Activated CD4-positive, alpha-beta T cell treated with anti-CD3 and anti-CD28 coated beads, Interleukin-2, amount 10 ng/mL, durations not matched to agents 24 days and 14 days (primary cell): ENCODE measurements at regions of chr19 and their contacts with region 1.

Region 1: GRCh38 chr19:47035127-47036096 is 13.0 kb downstream of the TMEM160 start:
- DNase-seq: peak; percentile 100
- H3K4me3 Mint-ChIP-seq: peak overlapping the region; percentile 86
- H3K27ac Mint-ChIP-seq: peak overlapping the region; percentile 92
- H3K4me1 Mint-ChIP-seq: peaks cover 25% of the 10 kb centered on the region
- H3K27me3 Mint-ChIP-seq: peaks cover 10% of the 10 kb centered on the region

Region 2: GRCh38 chr19:46736544-46737297 is 298.7 kb before region 1 on chr19:
- intact Hi-C with region 1: no loop called
- DNase-seq: no peak
- H3K4me3 Mint-ChIP-seq: no peak overlapping the region
- H3K27ac Mint-ChIP-seq: no peak overlapping the region
- H3K4me1 Mint-ChIP-seq: peaks cover 12% of the 10 kb centered on the region
- H3K27me3 Mint-ChIP-seq: no peaks in the 10 kb centered on the region

Region 3: DNA sequence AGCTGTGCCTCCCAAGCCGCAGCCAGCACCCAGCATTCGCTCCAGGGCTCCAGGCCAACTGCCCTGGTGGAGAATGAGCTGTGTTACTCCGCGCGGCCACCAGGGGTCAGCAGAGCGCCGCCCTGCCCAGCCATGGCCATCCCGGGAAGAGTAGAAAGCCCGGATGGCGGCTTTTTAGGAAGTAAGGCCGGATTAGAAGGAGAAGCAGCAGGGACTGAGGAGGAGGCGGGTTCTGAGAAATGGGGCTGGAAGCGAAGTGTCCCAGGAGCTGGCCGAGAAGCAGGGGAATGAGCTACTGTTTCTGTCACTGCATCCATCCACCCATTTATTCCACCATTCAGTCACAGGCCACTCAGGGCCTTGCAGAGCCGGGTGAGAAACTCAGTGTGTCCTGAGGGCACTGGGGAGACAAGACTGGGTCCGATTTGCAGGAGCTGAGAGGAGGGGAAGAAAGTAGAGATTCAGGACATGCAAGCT is 22.3 kb before region 1 on chr19:
- intact Hi-C with region 1: loop called (anchors 1 kb)
- DNase-seq: peak; percentile 91
- H3K4me3 Mint-ChIP-seq: peak overlapping the region; percentile 18
- H3K27ac Mint-ChIP-seq: no peak overlapping the region
- H3K4me1 Mint-ChIP-seq: peaks cover 9% of the 10 kb centered on the region
- H3K27me3 Mint-ChIP-seq: peaks cover 16% of the 10 kb centered on the region

Region 4: GRCh38 chr19:47047763-47048405 is 12.5 kb after region 1 on chr19:
- intact Hi-C with region 1: loop called (anchors 1 kb)
- DNase-seq: peak; percentile 93
- H3K4me3 Mint-ChIP-seq: peak overlapping the region; percentile 98
- H3K27ac Mint-ChIP-seq: peak overlapping the region; percentile 93
- H3K4me1 Mint-ChIP-seq: peaks cover 18% of the 10 kb centered on the region
- H3K27me3 Mint-ChIP-seq: peaks cover 2% of the 10 kb centered on the region

Region 5: DNA sequence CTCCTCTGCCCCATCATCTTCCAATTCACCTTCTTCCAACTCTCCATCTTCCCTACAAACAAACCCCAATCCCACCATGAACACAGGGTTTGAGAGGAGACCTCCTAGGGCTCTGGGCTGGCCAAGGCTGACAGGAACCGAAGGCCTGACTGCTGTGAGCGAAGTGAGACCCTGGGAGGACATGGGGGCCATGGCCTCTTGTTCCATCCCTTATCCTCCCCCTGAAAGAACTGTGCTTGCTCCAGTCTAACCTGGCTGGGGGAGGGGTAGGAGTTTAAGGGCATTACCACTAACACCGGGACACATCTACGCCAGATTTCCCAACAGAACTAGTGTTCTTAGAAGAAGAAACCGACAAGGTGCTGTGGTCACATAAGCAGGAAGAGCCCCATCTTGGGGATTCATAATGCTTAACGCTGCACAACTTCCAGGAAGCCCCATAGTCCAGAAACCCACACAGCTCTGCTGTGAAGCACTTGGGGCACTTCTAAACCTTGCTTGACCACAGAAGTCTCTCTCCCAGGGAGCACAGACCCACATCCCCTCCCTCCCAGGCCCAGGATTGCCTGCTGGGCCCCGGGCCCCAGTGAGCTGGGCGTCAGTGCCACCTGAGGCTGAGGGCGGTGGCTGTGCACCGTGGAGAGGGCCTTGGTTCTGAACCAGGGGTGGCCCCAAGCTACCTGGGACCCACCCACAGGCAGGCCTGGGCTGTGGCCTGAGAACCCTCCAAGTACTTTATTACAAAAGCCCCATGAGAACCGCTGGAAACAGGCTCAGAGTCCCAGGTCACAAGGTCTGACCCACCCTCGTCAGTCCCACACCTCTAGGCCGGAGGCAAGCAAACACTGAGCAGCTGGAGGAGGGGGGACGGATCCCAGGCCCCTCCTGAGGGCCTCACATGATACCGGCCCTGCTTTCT is 59.4 kb after region 1 on chr19:
- intact Hi-C with region 1: loop called (anchors 5 kb)
- DNase-seq: peak; percentile 88
- H3K4me3 Mint-ChIP-seq: peak overlapping the region; percentile 86
- H3K27ac Mint-ChIP-seq: peak overlapping the region; percentile 94
- H3K4me1 Mint-ChIP-seq: peaks cover 62% of the 10 kb centered on the region
- H3K27me3 Mint-ChIP-seq: no peaks in the 10 kb centered on the region

Region 6: DNA sequence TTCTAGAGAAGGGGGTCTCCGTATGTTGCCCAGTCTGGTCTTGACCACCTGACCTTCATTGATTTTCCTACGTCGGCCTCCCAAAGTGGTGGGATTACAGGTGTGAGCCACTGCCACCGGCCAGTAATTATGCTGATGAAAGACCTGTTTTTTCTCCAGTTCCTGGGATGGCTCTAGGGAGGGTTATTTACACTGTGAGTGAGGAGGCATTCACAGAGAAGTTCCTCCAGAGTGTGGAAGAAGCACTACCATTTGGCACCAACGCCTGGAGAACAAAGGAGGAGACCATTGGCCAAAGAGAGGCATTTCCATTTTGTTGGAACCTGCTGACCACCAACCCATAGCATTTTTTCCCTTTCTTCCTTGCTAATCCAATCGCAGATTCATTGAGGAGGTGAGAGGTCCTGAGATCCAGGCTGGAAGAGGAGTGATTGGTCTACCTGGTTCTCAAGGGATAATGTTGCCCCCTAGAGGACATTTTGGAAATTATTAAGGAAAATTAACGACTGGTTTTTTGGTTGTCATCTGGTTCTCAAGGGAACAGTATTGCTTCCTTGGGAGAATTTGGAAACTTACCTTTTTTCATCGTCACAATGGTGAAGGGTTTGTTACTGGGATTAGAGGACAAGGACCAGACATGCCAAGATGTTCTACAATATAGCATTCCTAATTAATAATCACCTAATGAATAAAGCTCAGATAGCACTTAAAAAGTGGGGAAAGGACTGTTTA is 89.7 kb after region 1 on chr19:
- intact Hi-C with region 1: loop called (anchors 1 kb)
- DNase-seq: peak; percentile 72
- H3K4me3 Mint-ChIP-seq: no peak overlapping the region
- H3K27ac Mint-ChIP-seq: peak overlapping the region; percentile 71
- H3K4me1 Mint-ChIP-seq: peaks cover 5% of the 10 kb centered on the region
- H3K27me3 Mint-ChIP-seq: peaks cover 2% of the 10 kb centered on the region